GM13977 (cell line): ENCODE measurements at regions of chr7 and their contacts with region 1.

Region 1: GRCh38 chr7:37234928-37235327 is 213.7 kb downstream of the ELMO1 start:
- DNase-seq: peak; percentile 12
- CTCF ChIP-seq: peak; percentile 50

Region 2: DNA sequence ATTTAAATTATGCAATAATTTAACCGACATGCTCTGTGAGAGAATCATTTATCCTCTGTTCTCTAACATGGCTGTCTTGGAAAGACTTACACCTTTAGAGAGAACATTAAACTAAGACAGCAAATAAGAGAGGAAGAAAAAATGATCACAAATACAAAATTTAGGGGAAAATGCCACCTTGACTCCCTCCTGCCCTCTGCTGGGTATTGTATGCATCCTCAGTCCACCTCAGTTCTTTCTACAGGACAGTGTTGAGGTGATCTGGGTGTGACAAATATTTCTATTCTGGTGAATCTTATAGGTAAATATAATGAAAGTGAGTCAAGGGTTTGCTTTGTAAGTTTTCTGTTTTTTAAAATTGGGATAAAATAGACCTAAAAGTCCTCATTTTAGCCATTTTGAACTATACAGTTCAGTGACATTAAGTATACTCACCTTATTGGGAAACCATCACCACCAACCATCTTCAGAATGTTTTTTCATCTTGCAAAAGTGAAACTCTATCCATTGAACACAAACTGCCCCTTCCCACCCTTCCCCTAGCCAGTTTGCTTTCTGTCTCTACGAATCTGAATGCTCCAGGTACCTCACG is 275.2 kb after region 1 on chr7:
- in situ Hi-C with region 1: loop called (anchors 10 kb)
- DNase-seq: peak; percentile 34
- CTCF ChIP-seq: peak; percentile 68

Region 3: GRCh38 chr7:37656913-37657530 is 422.1 kb after region 1 on chr7:
- in situ Hi-C with region 1: no loop called
- DNase-seq: no peak
- CTCF ChIP-seq: no peak

Region 4: GRCh38 chr7:37833107-37833817 is 598.3 kb after region 1 on chr7:
- in situ Hi-C with region 1: loop called (anchors 25 kb)
- DNase-seq: peak; percentile 40
- CTCF ChIP-seq: peak; percentile 58